HepG2 (cell line): ENCODE measurements at regions of chr2 and their contacts with region 1.

Region 1: GRCh38 chr2:37877457-37878315 is 47.4 kb upstream of the RMDN2 start:
- DNase-seq: peak; percentile 62
- ATAC-seq: peak; percentile 68
- H3K4me3 ChIP-seq: no peak overlapping the region
- H3K27ac ChIP-seq: no peak overlapping the region
- H3K4me1 ChIP-seq: no peaks in the 10 kb centered on the region
- H3K27me3 ChIP-seq: peaks cover 9 to 59% of the 10 kb centered on the region in 2 experiments; a peak in 4 of 5 replicates
- CTCF ChIP-seq: peak; percentile 80
- EP300 ChIP-seq: no peak
- POLR2A ChIP-seq: no peak
- RAD21 ChIP-seq: peak; percentile 42; the same call in 1 of the 2 replicates

Region 2: GRCh38 chr2:37389989-37390765 is 487.5 kb before region 1 on chr2:
- CTCF ChIA-PET with region 1: interaction called, 21 read pairs
- POLR2A ChIA-PET with region 1: no interaction called
- in situ Hi-C with region 1: loop called (anchors 5 kb)
- intact Hi-C with region 1: no loop called
- DNase-seq: peak; percentile 56
- ATAC-seq: peak; percentile 80
- H3K4me3 ChIP-seq: no peak overlapping the region
- H3K27ac ChIP-seq: no peak overlapping the region
- H3K4me1 ChIP-seq: peaks cover 12% of the 10 kb centered on the region; the same call in 1 of the 2 replicates
- H3K27me3 ChIP-seq: peaks cover 0 to 2% of the 10 kb centered on the region in 2 experiments; a peak in 2 of 5 replicates
- CTCF ChIP-seq: no peak
- EP300 ChIP-seq: peak in 1 of 2 experiments; percentile 14; a peak in 1 of 4 replicates
- POLR2A ChIP-seq: no peak
- RAD21 ChIP-seq: no peak

Region 3: DNA sequence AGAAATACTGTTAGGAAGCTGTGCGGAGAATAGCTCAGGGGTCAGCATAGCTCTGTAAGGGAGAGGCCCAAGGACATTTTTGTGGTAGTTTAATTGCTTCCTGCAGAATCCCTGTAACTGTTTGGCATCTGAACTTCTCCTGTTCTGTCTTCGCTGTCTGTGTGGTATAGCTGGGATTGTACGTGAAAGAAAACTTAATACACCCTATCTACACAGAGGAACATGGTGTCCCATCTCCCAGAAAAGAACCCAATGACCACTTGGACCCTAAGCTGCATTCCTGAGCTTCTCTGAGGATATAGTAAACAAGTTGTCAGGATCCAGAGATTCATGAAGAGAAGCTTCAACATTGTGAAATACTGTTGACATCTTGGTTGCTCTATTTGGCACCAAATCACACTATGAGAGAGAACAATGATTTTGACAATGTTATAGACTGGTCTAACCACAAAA is 287.5 kb before region 1 on chr2:
- CTCF ChIA-PET with region 1: no interaction called
- POLR2A ChIA-PET with region 1: no interaction called
- in situ Hi-C with region 1: no loop called
- intact Hi-C with region 1: no loop called
- DNase-seq: no peak
- ATAC-seq: no peak
- H3K4me3 ChIP-seq: no peak overlapping the region
- H3K27ac ChIP-seq: no peak overlapping the region
- H3K4me1 ChIP-seq: no peaks in the 10 kb centered on the region
- H3K27me3 ChIP-seq: no peaks in the 10 kb centered on the region; a peak in 3 of 5 replicates
- CTCF ChIP-seq: no peak
- EP300 ChIP-seq: no peak
- POLR2A ChIP-seq: no peak
- RAD21 ChIP-seq: no peak

Region 4: GRCh38 chr2:37648331-37649011 is 229.2 kb before region 1 on chr2:
- CTCF ChIA-PET with region 1: no interaction called
- POLR2A ChIA-PET with region 1: no interaction called
- in situ Hi-C with region 1: no loop called
- intact Hi-C with region 1: loop called (anchors 1 kb)
- DNase-seq: no peak
- ATAC-seq: peak; percentile 71
- H3K4me3 ChIP-seq: no peak overlapping the region
- H3K27ac ChIP-seq: no peak overlapping the region
- H3K4me1 ChIP-seq: no peaks in the 10 kb centered on the region
- H3K27me3 ChIP-seq: peaks cover 2 to 29% of the 10 kb centered on the region in 2 experiments; a peak in 3 of 5 replicates
- CTCF ChIP-seq: 0 out of 2 replicates have a peak, but pooled peaks have one; percentile 8
- EP300 ChIP-seq: no peak
- POLR2A ChIP-seq: no peak
- RAD21 ChIP-seq: no peak

Region 5: GRCh38 chr2:37688771-37689468 is 188.8 kb before region 1 on chr2:
- CTCF ChIA-PET with region 1: no interaction called
- POLR2A ChIA-PET with region 1: no interaction called
- in situ Hi-C with region 1: no loop called
- intact Hi-C with region 1: no loop called
- DNase-seq: no peak
- ATAC-seq: no peak
- H3K4me3 ChIP-seq: no peak overlapping the region
- H3K27ac ChIP-seq: no peak overlapping the region
- H3K4me1 ChIP-seq: no peaks in the 10 kb centered on the region
- H3K27me3 ChIP-seq: no peaks in the 10 kb centered on the region
- CTCF ChIP-seq: no peak
- EP300 ChIP-seq: no peak
- POLR2A ChIP-seq: no peak
- RAD21 ChIP-seq: no peak

Region 6: DNA sequence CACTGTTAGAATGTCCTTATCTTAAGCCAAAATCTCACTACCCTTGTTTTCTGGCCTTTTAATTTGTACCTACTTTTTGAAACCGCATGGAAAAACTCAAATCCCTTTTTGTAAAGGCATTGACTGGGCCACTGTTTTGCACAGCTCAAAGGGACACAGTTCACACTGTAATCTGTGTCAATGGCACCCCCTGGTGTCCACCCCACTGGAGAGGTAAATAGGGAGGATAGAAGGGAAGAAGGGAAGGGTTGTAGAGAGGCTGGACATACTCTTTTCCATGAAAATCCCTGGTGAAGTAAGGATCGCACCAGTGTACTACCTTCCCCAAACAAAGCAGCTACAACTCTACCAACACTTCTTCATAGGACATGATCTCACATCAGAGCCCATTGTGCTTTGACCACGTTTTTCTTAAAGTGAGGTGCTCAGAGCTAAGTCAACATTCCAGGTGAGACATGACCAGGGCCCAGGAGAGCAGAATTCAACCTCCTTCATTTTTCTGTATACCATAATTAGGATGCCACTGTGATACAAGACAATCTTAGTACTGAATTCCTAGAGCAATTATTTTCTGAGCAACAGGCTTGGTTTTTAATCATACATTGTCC is 45.0 kb before region 1 on chr2:
- CTCF ChIA-PET with region 1: no interaction called
- POLR2A ChIA-PET with region 1: no interaction called
- in situ Hi-C with region 1: no loop called
- intact Hi-C with region 1: loop called (anchors 2 kb)
- DNase-seq: peak; percentile 73
- ATAC-seq: peak; percentile 99
- H3K4me3 ChIP-seq: no peak overlapping the region
- H3K27ac ChIP-seq: no peak overlapping the region
- H3K4me1 ChIP-seq: peaks cover 7% of the 10 kb centered on the region
- H3K27me3 ChIP-seq: peaks cover 0 to 13% of the 10 kb centered on the region in 2 experiments; a peak in 2 of 5 replicates
- CTCF ChIP-seq: peak; percentile 93
- EP300 ChIP-seq: no peak
- POLR2A ChIP-seq: no peak
- RAD21 ChIP-seq: peak; percentile 78

Region 7: DNA sequence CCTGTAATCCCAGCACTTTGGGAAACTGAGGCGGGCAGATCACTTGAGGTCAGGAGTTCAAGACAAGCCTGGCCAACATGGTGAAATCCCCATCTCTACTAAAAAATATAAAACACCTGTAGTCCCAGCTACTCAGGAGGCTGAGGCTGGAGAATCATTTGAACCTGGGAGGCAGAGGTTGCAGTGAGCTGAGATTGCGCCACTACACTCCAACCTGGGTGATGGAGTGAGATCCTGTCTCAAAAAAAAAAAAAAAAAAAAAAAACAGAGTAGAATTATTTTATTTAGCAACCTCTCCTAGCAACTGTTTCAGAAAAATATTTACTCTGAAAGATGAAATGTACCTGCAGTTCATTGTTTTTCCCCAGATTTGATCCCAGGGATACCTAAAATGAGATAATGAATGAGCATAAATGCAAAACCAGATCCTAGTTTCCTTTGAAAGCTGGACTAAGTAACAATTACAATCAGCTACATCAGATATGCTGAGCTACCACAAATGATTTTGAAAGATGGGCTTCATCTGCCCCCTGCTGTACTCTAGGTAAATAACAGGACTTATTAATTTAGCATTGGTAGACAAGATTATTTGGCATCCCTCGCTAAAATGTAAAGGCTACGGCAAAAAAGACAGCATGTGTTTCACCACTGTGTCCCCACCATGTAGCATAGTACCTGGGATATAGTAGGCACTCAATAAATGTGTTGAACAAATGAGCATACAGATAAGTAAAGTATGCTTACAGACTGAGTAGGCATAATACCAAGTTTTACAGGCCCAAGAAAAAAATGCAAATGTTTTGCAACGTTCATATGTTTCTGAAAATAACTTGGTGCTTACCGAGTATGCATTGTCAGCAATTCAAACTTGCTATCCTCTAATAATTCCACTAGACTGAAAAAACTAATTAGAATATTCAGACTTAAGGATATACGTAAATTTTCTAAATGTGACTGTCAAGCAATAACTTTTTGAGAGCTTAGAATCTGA is 396.9 kb after region 1 on chr2:
- CTCF ChIA-PET with region 1: no interaction called
- POLR2A ChIA-PET with region 1: no interaction called
- in situ Hi-C with region 1: no loop called
- intact Hi-C with region 1: loop called (anchors 5 kb)
- DNase-seq: peak; percentile 76
- ATAC-seq: peak; percentile 82
- H3K4me3 ChIP-seq: no peak overlapping the region
- H3K27ac ChIP-seq: no peak overlapping the region
- H3K4me1 ChIP-seq: peaks cover 21% of the 10 kb centered on the region
- H3K27me3 ChIP-seq: peaks cover 0 to 4% of the 10 kb centered on the region in 2 experiments; a peak in 3 of 5 replicates
- CTCF ChIP-seq: peak; percentile 81
- EP300 ChIP-seq: no peak
- POLR2A ChIP-seq: no peak
- RAD21 ChIP-seq: peak; percentile 74